ENCODE measurements at regions of chr15 and their contacts with region 1.

Region 1: DNA sequence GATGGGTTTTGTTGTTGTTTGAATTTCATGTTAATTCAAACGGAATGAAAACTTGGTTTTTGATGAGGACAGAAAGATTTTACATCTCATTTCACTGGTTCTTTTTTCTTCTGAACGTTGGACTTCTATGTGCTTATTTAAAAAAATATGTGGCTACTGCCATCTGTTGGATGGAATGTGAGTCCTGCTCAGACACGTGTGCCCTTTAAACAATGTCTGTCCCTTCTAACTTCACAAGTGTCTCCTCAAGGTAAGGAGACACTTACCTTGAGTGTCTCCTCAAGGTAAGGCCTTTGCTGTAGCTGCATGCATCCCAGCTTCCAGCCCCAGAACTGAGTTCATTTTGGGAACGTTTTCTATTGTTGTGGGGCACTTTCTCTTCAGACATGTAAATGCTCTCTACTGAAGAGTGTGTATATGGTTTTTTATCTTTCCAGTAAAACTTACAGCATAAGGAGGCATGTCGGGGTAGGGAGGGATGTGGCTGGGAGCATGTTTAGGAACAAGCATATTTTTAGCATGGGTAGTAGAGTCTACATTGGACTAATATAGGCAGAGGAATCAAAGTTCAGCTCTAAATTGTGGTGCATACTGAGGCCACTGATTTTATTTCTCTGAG is 63.1 kb upstream of the UBE3A start:
- DNase-seq: peak in 1 of 2 donors; percentile 12
- ATAC-seq: peak in 3 of 8 donors; percentile 46 to 55 (median 49)
- H3K4me3 ChIP-seq: no peak overlapping the region
- H3K27ac ChIP-seq: no peak overlapping the region
- H3K4me1 ChIP-seq: no peaks in the 10 kb centered on the region
- H3K27me3 ChIP-seq: no peaks in the 10 kb centered on the region
- CTCF ChIP-seq: peak; percentile 32 to 76 (median 62)

Region 2: DNA sequence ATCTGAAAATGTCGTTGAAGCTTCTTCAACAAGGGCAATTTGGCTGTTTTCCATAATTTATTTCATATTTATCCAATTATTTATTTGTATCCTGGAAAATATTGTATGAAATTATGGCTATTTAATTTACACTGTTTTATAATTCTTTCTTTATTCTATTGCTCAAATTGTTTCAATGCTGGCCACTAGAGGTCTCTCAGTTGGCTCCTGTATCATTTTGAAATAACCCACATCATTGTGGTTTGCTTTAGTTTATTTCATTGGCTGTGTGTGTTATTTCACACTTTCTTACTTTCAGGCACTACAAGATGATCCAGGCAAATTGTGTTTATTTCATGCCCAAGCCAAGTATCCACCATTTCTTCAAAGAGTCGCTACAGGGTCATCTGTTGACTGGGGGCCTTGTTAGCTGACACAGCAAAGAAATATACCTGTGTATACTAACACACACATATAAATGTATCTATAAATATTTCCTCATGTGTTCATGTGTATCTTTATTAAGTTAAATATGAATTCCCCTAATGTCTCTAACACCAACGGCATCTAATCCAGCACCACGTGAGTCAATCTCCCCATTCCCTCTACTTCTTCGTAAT is 740.1 kb before region 1 on chr15:
- intact Hi-C with region 1: loop called in 2 of 10 experiments (anchors 5 to 10 kb)
- DNase-seq: no peak
- ATAC-seq: no peak
- H3K4me3 ChIP-seq: no peak overlapping the region
- H3K27ac ChIP-seq: no peak overlapping the region
- H3K4me1 ChIP-seq: no peaks in the 10 kb centered on the region
- H3K27me3 ChIP-seq: no peaks in the 10 kb centered on the region
- CTCF ChIP-seq: peak in 8 of 9 donors; percentile 20 to 58 (median 46)

Region 3: GRCh38 chr15:24772686-24773373 is 729.1 kb before region 1 on chr15:
- intact Hi-C with region 1: loop called in 2 of 10 experiments (anchors 5 to 10 kb)
- DNase-seq: peak; percentile 69 to 70
- ATAC-seq: peak; percentile 95 to 99 (median 98)
- H3K4me3 ChIP-seq: peak overlapping the region in 9 of 10 donors; percentile 20 to 55 (median 46)
- H3K27ac ChIP-seq: peak overlapping the region in 5 of 10 donors; percentile 31 to 53 (median 49)
- H3K4me1 ChIP-seq: no peaks in the 10 kb centered on the region
- H3K27me3 ChIP-seq: peaks cover 0 to 43% (median 4%) of the 10 kb centered on the region in 7 donors
- CTCF ChIP-seq: no peak

Region 4: GRCh38 chr15:25136119-25136518 is 365.8 kb before region 1 on chr15:
- intact Hi-C with region 1: loop called in 2 of 10 experiments (anchors 5 to 10 kb)
- DNase-seq: no peak
- ATAC-seq: peak in 6 of 8 donors; percentile 43 to 73 (median 56)
- H3K4me3 ChIP-seq: no peak overlapping the region
- H3K27ac ChIP-seq: no peak overlapping the region
- H3K4me1 ChIP-seq: peaks cover 0 to 5% (median 0%) of the 10 kb centered on the region in 9 donors
- H3K27me3 ChIP-seq: no peaks in the 10 kb centered on the region
- CTCF ChIP-seq: peak in 7 of 9 donors; percentile 24 to 44 (median 39)

Region 5: GRCh38 chr15:25450163-25450562 is 51.8 kb before region 1 on chr15:
- intact Hi-C with region 1: no loop called
- DNase-seq: no peak
- ATAC-seq: no peak
- H3K4me3 ChIP-seq: no peak overlapping the region
- H3K27ac ChIP-seq: no peak overlapping the region
- H3K4me1 ChIP-seq: no peaks in the 10 kb centered on the region
- H3K27me3 ChIP-seq: no peaks in the 10 kb centered on the region
- CTCF ChIP-seq: no peak

Region 6: DNA sequence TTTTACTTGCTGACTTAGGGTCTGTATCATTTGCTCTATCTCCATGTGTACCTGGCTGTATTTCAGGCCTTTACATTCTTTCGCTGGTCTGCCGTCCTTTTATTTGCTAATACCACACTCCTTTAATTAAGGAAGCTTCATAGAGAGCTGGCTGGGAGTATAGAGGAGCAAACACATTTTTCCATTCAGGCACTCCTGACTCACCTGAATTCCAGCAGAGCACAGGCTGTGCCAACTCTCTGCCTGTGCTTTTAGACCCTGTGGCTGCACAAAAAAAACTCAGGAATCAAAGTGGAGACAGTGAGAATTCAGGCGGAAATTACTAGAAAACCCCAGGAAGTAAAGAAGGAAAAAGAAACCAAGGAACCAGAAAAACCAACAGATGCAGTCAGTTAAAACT is 390.2 kb after region 1 on chr15:
- intact Hi-C with region 1: no loop called
- DNase-seq: no peak
- ATAC-seq: no peak
- H3K4me3 ChIP-seq: no peak overlapping the region
- H3K27ac ChIP-seq: no peak overlapping the region
- H3K4me1 ChIP-seq: no peaks in the 10 kb centered on the region
- H3K27me3 ChIP-seq: peaks cover 0 to 15% (median 0%) of the 10 kb centered on the region in 7 donors
- CTCF ChIP-seq: no peak

Measured in heart right ventricle (tissue), 16 donors.